ENCODE measurements at regions of chr7 and their contacts with region 1.

Region 1: GRCh38 chr7:10412422-10413019 is 561.2 kb upstream of the PHF14 start:
- DNase-seq: no peak
- H3K4me3 Mint-ChIP-seq: no peak overlapping the region
- H3K27ac Mint-ChIP-seq: no peak overlapping the region
- H3K4me1 Mint-ChIP-seq: no peaks in the 10 kb centered on the region
- H3K27me3 Mint-ChIP-seq: no peaks in the 10 kb centered on the region

Region 2: GRCh38 chr7:8418629-8419245 is 1993.8 kb before region 1 on chr7:
- CTCF ChIA-PET with region 1: interaction called, 10 read pairs
- POLR2A ChIA-PET with region 1: no interaction called
- intact Hi-C with region 1: loop called (anchors 5 kb)
- DNase-seq: peak; percentile 28
- H3K4me3 Mint-ChIP-seq: no peak overlapping the region
- H3K27ac Mint-ChIP-seq: no peak overlapping the region
- H3K4me1 Mint-ChIP-seq: no peaks in the 10 kb centered on the region
- H3K27me3 Mint-ChIP-seq: no peaks in the 10 kb centered on the region

Region 3: DNA sequence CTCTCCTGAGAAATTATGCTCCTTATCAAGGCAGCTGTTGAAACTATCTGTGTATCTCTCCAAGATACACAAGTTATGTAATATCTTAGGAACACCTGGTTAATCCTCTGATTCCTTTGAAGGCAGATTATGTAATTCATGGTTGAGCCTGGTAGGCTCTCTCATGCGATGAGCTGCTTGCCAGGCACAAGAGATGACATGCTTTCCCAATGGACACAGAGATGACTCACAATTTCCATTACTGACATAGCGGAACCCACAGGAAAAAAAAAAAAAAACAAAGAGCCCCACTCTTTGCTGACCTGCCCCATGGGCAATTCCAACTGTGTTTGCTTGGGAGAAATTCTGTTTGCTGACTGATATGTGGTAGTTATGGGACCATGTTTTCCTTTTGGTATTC is 175.2 kb before region 1 on chr7:
- CTCF ChIA-PET with region 1: no interaction called
- POLR2A ChIA-PET with region 1: no interaction called
- intact Hi-C with region 1: no loop called
- DNase-seq: no peak
- H3K4me3 Mint-ChIP-seq: no peak overlapping the region
- H3K27ac Mint-ChIP-seq: no peak overlapping the region
- H3K4me1 Mint-ChIP-seq: no peaks in the 10 kb centered on the region
- H3K27me3 Mint-ChIP-seq: no peaks in the 10 kb centered on the region

Region 4: DNA sequence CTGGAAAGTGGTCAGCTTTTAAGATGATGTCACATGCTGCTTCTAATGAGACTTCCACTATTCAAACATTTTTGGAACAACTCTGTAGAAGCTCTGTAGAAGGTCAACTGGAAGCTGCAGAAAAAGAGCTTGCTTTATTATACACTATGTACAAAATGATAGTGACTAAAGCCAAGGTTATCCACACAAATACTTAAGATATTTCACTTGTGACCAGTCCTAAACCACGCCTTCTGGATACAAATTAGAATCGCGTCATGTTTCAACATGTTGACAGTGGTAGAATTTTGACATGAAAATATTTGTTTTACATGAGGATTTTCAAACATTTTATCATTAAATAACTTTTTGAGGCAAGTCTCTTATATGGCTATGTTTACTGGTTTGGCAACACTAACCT is 61.5 kb after region 1 on chr7:
- CTCF ChIA-PET with region 1: no interaction called
- POLR2A ChIA-PET with region 1: no interaction called
- intact Hi-C with region 1: no loop called
- DNase-seq: no peak
- H3K4me3 Mint-ChIP-seq: no peak overlapping the region
- H3K27ac Mint-ChIP-seq: no peak overlapping the region
- H3K4me1 Mint-ChIP-seq: no peaks in the 10 kb centered on the region
- H3K27me3 Mint-ChIP-seq: no peaks in the 10 kb centered on the region